Left ventricle myocardium superior (tissue), 1 donor: ENCODE measurements at regions of chr11 and their contacts with region 1.

Region 1: GRCh38 chr11:8813658-8814057 is 97.3 kb upstream of the AKIP1 start:
- DNase-seq: peak; percentile 75
- ATAC-seq: peak; percentile 54

Region 2: GRCh38 chr11:8689726-8690255 is 123.9 kb before region 1 on chr11:
- intact Hi-C with region 1: loop called (anchors 5 kb)
- DNase-seq: no peak
- ATAC-seq: no peak

Region 3: DNA sequence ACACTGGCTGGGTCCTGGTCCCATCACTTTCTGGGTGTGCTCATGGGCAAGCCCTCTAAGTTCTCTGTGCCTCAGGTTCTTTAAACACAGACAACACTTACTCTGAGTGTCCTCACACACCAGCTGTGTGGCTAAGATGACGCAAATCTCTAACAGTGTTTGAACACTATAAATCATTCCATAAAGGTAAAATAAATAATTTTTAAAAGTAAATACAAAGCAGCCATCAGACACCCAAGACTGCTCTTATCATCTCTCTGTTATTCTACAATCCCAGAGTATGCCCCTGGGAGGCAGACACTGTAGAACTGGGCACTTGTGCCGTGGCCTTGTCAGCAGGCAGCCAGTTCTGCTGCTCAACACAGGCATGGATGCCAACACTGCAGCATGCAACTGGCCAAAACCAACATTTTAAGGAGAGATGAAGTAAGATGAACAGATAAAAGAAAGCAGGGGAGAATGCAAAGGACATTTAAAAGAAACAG is 74.3 kb before region 1 on chr11:
- intact Hi-C with region 1: no loop called
- DNase-seq: no peak
- ATAC-seq: peak; percentile 32

Region 4: DNA sequence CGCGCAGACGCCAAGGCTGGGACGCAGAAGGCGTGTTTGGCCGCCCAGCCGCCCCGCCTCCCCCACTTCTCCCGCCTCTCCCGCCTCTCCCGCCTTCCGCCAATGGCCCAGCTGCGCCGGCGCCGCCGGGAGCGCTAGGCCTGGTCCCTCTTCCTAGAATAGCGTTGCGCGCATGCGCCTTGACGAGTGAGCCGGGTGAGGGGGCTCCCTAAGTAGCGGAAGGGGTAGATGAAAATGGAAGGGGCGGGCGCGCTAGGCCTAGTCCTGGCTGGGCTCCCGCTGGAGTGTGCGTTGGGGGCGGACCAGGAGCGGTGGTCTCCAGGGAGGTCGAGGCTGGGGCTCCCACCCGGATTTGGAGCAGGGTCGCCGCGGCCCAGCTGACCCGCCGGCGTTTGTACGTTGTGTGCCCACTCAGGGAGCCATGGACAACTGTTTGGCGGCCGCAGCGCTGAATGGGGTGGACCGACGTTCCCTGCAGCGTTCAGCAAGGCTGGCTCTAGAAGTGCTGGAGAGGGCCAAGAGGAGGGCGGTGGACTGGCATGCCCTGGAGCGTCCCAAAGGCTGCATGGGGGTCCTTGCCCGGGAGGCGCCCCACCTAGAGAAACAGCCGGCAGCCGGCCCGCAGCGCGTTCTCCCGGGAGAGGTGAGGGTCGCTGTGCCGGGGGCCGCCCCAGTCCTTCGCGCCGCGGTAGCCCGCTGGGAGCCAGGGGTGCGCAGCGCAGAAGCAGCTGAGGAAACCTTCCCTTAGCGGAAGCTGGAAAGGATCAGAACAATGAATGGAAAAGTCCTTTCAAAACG is 97.6 kb after region 1 on chr11 and contains the start of gene AKIP1:
- intact Hi-C with region 1: loop called (anchors 10 kb)
- DNase-seq: peak; percentile 98
- ATAC-seq: peak; percentile 96
- total RNA-seq, gene AKIP1: 24.8 TPM